Heart right ventricle (tissue), 16 donors: ENCODE measurements at regions of chr13 and their contacts with region 1.

Region 1: GRCh38 chr13:29607465-29607864 is 12.0 kb upstream of the SLC7A1 start:
- DNase-seq: no peak
- ATAC-seq: no peak
- H3K4me3 ChIP-seq: no peak overlapping the region
- H3K27ac ChIP-seq: no peak overlapping the region
- H3K4me1 ChIP-seq: peaks cover 0 to 11% (median 0%) of the 10 kb centered on the region in 9 donors
- H3K27me3 ChIP-seq: peaks cover 0 to 10% (median 0%) of the 10 kb centered on the region in 7 donors
- CTCF ChIP-seq: no peak

Region 2: DNA sequence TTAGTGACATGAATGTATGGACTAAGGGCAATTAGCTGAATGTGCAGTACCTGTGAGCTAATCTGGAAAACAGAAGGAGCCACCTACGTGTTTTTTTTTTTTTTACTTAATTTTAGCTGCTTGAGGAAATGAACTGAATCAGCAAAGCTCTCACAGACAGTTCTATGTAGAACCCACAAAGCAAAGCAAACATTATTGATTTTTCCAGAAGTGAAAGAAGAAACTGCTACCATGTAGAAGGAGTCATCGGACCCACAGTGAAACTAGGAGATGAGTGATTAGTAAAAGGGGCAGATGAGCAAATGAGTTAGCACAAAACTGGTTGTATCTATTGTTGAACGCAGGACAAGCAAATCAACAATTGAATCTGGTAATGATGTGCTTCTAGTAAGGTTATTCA is 82.1 kb after region 1 on chr13:
- intact Hi-C with region 1: loop called in 1 of 10 experiments (anchors 5 kb)
- DNase-seq: no peak
- ATAC-seq: no peak
- H3K4me3 ChIP-seq: no peak overlapping the region
- H3K27ac ChIP-seq: no peak overlapping the region
- H3K4me1 ChIP-seq: peaks cover 0 to 9% (median 0%) of the 10 kb centered on the region in 9 donors
- H3K27me3 ChIP-seq: no peaks in the 10 kb centered on the region
- CTCF ChIP-seq: no peak

Region 3: GRCh38 chr13:29774830-29775229 is 167.4 kb after region 1 on chr13:
- intact Hi-C with region 1: no loop called
- DNase-seq: no peak
- ATAC-seq: no peak
- H3K4me3 ChIP-seq: no peak overlapping the region
- H3K27ac ChIP-seq: no peak overlapping the region
- H3K4me1 ChIP-seq: no peaks in the 10 kb centered on the region
- H3K27me3 ChIP-seq: no peaks in the 10 kb centered on the region
- CTCF ChIP-seq: no peak

Region 4: DNA sequence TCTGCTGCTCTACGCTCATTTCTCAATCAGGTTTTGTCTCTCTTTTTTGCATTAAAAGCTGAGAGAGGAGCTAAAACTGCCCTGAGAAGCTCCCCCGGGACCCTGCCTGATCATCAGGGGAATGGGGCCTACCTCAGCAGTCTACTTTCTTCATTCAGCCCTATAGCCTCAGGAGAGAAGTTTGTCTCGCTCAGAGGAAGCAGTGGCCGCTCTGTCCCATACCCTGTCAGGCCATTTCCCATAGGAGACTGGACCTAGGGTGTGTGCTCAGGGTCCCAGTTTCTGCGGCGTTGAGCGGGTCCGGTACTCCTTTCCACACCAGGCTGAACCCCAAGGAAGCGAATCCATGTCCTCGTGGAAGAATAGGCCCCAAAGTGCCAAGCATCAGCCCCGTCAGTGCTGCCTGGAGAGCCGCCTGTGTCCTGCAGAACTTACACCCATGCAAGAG is 836.5 kb after region 1 on chr13:
- intact Hi-C with region 1: no loop called
- DNase-seq: no peak
- ATAC-seq: no peak
- H3K4me3 ChIP-seq: no peak overlapping the region
- H3K27ac ChIP-seq: no peak overlapping the region
- H3K4me1 ChIP-seq: peaks cover 0 to 26% (median 16%) of the 10 kb centered on the region in 9 donors
- H3K27me3 ChIP-seq: no peaks in the 10 kb centered on the region
- CTCF ChIP-seq: no peak